ENCODE measurements at regions of chr6 and their contacts with region 1.

Region 1: DNA sequence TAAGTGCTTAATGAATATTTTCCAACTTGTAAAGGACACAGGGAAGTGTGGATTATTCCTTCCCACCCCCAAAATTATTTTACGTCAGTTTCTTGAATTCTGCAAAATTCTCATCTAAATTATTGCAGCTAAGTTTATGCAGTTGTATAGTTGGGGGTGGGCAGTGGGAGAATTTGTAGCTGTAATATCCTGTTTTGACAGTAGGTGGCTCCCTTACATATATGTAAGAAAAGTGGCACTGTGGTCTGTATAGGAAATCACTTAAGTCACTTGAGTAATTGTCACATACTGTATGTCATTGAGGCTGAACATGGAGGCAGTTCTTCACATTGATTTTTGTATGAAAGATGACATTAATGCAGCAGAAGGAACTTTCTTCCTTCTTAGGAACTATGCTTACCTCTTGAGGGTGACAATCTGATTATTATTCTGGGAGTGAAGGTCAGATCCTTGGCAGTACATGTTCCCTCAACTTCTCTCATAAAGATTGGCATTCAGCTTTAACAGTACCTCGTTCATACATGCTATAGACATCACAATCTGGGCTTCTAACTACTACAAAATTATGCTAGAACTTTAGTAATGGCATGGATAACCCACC is 14.7 kb upstream of the CFAP206 start:
- DNase-seq: peak; percentile 14
- H3K4me3 Mint-ChIP-seq: no peak overlapping the region
- H3K27ac Mint-ChIP-seq: no peak overlapping the region
- H3K4me1 Mint-ChIP-seq: no peaks in the 10 kb centered on the region
- H3K27me3 Mint-ChIP-seq: no peaks in the 10 kb centered on the region

Region 2: GRCh38 chr6:87066449-87067333 is 326.4 kb before region 1 on chr6:
- intact Hi-C with region 1: loop called (anchors 10 kb)
- DNase-seq: no peak
- H3K4me3 Mint-ChIP-seq: no peak overlapping the region
- H3K27ac Mint-ChIP-seq: no peak overlapping the region
- H3K4me1 Mint-ChIP-seq: no peaks in the 10 kb centered on the region
- H3K27me3 Mint-ChIP-seq: peaks cover 10% of the 10 kb centered on the region

Region 3: DNA sequence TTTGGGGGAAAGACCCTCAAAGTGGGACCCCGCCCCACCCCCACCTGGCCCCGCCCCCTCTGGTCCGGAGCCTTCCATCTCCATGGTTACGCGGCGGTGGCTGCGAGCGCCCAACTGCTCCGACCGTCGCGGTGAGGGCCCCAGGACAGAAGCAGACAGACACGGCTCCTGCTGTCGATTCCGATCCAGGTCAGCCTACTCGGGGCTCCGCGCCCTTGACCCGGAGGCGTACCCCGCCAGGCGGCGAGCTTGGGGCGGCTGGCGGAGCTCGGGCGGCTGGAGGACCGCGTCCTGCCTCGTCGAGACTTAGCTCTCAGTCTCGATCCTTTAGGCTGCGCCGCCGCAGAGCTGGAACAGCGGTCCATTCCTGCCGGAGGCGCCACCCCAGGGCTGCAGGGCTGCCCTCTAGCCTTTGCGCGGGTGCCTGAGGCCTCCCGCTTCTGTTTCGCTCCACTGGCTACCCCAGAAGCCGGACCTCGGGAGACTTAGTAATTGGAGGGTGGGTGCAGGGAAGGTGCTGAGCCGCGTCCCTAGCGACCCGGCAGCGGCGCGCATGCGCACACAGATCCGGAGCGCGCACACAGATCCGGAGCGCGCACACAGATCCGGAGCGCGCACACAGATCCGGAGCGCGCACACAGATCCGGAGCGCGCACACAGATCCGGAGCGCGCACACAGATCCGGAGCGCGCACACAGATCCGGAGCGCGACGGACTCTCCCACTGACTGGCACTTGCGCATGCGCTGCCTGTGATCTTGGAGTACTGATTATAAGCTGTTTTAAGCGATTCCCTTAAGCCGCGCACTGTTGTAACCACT is 15.0 kb after region 1 on chr6 and contains the start of gene CFAP206:
- intact Hi-C with region 1: loop called (anchors 1 kb)
- DNase-seq: peak; percentile 66
- H3K4me3 Mint-ChIP-seq: peak within 1 kb of the TSS; percentile 84
- H3K27ac Mint-ChIP-seq: peak within 1 kb of the TSS; percentile 76
- H3K4me1 Mint-ChIP-seq: peaks cover 16% of the 10 kb centered on the region
- H3K27me3 Mint-ChIP-seq: peaks cover 28% of the 10 kb centered on the region
- total RNA-seq, gene CFAP206: 0.20 TPM in 1 of 2 replicates, not detected in the other

Region 4: DNA sequence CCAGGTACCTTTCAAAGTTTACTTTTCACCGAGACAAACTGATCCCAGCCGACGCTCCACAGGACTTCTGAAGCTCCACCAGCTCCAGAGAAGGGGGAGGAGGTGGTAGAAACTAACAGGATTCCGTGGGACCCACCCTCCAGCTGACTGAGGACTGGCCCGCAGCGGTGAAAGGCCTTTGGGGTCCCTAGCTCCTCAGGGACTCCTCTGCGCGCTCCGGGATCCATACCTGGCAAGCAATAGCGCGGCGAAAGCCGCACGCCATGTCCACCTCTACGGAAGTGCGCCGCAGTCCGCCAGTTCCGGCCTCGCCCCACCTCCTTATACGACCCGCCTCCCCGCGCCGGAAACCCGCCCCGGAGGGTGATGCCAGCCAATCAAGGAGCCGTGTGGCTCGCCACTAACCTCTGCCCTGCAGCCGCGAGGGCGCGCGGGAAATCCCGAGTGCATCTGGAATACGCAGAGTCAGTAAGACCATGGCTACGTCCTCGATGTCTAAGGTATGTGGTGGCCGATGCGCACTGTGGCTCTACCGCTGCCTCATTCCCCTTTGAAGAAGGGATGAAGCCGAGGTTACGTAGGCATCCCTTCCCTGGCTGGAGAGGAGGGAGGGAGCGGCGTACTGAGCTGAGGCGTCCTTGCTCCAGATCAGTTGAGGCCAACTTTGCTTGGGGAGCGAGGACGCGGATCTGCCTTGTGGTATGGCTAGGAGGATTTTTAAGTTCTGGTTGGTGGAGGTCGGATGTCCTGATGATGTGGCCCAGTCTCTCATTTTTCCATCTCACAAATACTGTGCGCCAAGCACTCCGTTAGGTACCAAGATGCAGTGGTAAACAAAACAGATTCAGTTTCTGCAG is 196.8 kb after region 1 on chr6 and contains the starts of genes ORC3 and RARS2:
- intact Hi-C with region 1: loop called (anchors 5 kb)
- DNase-seq: peak; percentile 96
- H3K4me3 Mint-ChIP-seq: peak within 1 kb of the TSS; percentile 90
- H3K27ac Mint-ChIP-seq: peak within 1 kb of the TSS; percentile 79
- H3K4me1 Mint-ChIP-seq: peaks cover 42% of the 10 kb centered on the region
- H3K27me3 Mint-ChIP-seq: no peaks in the 10 kb centered on the region
- total RNA-seq, gene ORC3: 34.7 and 38.6 TPM in 2 replicates
- total RNA-seq, gene RARS2: 24.6 and 24.7 TPM in 2 replicates

Region 5: GRCh38 chr6:88238065-88238464 is 844.9 kb after region 1 on chr6:
- intact Hi-C with region 1: loop called (anchors 2 kb)
- DNase-seq: no peak
- H3K4me3 Mint-ChIP-seq: no peak overlapping the region
- H3K27ac Mint-ChIP-seq: no peak overlapping the region
- H3K4me1 Mint-ChIP-seq: no peaks in the 10 kb centered on the region
- H3K27me3 Mint-ChIP-seq: no peaks in the 10 kb centered on the region

Region 6: DNA sequence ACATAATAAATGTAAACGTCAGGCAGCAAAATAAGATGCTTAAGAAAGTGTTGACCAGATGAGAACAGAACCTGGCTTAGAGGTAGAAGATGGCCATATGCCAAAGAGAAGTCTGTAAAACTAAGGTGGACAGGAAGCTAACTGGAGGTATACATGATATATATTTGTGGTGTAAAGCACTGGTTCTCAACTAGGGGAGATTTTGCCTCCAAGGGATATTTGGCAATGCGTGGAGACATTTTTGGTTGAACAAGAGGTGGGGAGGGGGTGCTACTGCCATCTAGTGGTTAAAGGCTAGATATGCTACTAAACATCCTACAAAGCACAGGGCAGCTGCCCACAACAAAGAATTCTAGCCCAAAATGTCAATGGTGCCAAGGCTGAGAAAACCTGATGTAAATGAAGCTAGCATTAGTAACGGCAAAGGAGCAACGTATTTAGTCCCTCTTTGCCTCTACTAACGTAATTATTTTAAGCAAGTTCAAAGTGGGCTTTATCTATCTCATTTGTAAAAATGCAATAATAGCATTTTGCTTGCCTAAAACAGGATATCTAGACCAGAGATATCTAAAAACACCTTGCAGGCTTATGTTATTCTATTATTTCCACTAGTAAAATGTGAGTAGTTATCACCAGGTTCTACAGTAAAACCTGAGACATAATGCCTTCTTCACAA is 1387.7 kb after region 1 on chr6:
- intact Hi-C with region 1: loop called (anchors 1 kb)
- DNase-seq: peak; percentile 31
- H3K4me3 Mint-ChIP-seq: no peak overlapping the region
- H3K27ac Mint-ChIP-seq: no peak overlapping the region
- H3K4me1 Mint-ChIP-seq: peaks cover 5% of the 10 kb centered on the region
- H3K27me3 Mint-ChIP-seq: no peaks in the 10 kb centered on the region